ENCODE measurements at regions of chr1 and their contacts with region 1.

Region 1: GRCh38 chr1:117059678-117060440 is at the start of gene TTF2:
- DNase-seq: peak; percentile 97
- total RNA-seq, gene TTF2: 16.3 to 18.1 TPM

Region 2: GRCh38 chr1:116570358-116571200 is 489.3 kb before region 1 on chr1 and contains the start of gene CD58:
- intact Hi-C with region 1: loop called (anchors 10 kb)
- DNase-seq: peak; percentile 97
- total RNA-seq, gene CD58: 28.3 to 31.6 TPM

Region 3: GRCh38 chr1:116853670-116854402 is 206.0 kb before region 1 on chr1:
- intact Hi-C with region 1: loop called (anchors 10 kb)
- DNase-seq: no peak

Region 4: GRCh38 chr1:116919802-116920201 is 140.1 kb before region 1 on chr1:
- intact Hi-C with region 1: loop called in 1 of 2 experiments (anchors 2 kb)
- DNase-seq: no peak

Region 5: GRCh38 chr1:116987256-116987555 is 72.7 kb before region 1 on chr1:
- intact Hi-C with region 1: no loop called
- DNase-seq: no peak

Region 6: DNA sequence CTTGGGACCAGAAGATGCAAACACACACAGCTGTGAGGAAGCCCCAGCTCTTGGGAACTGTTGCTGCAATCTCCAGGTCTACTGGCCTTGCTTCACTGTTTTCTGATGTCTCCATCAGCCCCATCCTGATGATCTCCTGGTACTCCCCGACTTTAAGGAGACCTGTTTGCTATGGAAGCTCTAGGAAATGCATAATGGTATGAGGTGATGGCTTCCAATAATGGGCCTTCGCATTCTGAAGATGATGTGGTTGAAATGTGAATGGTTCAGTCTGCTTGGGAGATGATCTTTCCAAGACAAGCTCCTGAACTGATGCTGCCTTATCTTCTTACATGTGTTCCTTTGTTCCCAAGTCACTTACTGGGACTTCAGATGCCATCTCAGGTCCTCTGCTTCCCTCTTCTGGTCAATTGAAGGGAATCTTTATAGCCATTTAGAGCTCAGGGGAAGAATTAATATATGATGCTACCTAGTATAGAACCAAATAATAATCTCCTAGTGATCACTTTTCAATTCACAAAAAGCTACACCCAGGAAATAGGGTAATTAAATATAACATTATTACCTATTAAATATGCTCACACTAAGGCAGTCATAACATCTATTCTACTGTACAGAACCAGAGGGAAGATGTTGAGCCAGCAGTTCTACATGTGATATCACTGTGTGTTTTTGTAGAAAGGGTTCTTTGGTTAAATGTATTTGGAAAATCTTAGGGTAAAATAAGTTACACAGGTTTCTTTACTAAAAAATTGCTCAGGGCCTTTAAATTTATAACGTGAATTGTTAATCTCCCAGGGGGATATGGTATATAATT is 224.7 kb after region 1 on chr1:
- intact Hi-C with region 1: loop called in 1 of 2 experiments (anchors 10 kb)
- DNase-seq: no peak